ENCODE measurements at regions of chr12 and their contacts with region 1.

Region 1: GRCh38 chr12:108950991-108951739 is 69.7 kb downstream of the SVOP start:
- DNase-seq: peak; percentile 61 to 74 (median 66)
- H3K4me3 ChIP-seq: no peak overlapping the region
- H3K4me3 Mint-ChIP-seq: no peak overlapping the region
- H3K27ac ChIP-seq: no peak overlapping the region
- H3K27ac Mint-ChIP-seq: peak overlapping the region in 4 of 7 donors; percentile 18 to 45 (median 30)
- H3K4me1 ChIP-seq: peaks cover 21 to 29% of the 10 kb centered on the region in 2 donors
- H3K4me1 Mint-ChIP-seq: peaks cover 25% of the 10 kb centered on the region
- H3K27me3 ChIP-seq: no peaks in the 10 kb centered on the region
- H3K27me3 Mint-ChIP-seq: peaks cover 7 to 10% (median 10%) of the 10 kb centered on the region in 3 donors
- CTCF ChIP-seq: peak; percentile 97

Region 2: GRCh38 chr12:108570743-108571608 is 380.2 kb before region 1 on chr12:
- intact Hi-C with region 1: loop called (anchors 10 kb)
- DNase-seq: no peak
- H3K4me3 ChIP-seq: no peak overlapping the region
- H3K4me3 Mint-ChIP-seq: no peak overlapping the region
- H3K27ac ChIP-seq: no peak overlapping the region
- H3K27ac Mint-ChIP-seq: no peak overlapping the region
- H3K4me1 ChIP-seq: peaks cover 20 to 22% of the 10 kb centered on the region in 2 donors
- H3K4me1 Mint-ChIP-seq: peaks cover 19% of the 10 kb centered on the region
- H3K27me3 ChIP-seq: no peaks in the 10 kb centered on the region
- H3K27me3 Mint-ChIP-seq: peaks cover 2% of the 10 kb centered on the region in 3 donors
- CTCF ChIP-seq: no peak

Region 3: GRCh38 chr12:108664338-108665258 is 286.6 kb before region 1 on chr12:
- intact Hi-C with region 1: loop called in 1 of 2 experiments (anchors 10 kb)
- DNase-seq: peak; percentile 95 to 97 (median 95)
- H3K4me3 ChIP-seq: peak overlapping the region; percentile 5 to 67 (median 43)
- H3K4me3 Mint-ChIP-seq: peak overlapping the region; percentile 61 to 86
- H3K27ac ChIP-seq: peak overlapping the region; percentile 88 to 95
- H3K27ac Mint-ChIP-seq: peak overlapping the region; percentile 97 to 99 (median 99)
- H3K4me1 ChIP-seq: peaks cover 54 to 61% of the 10 kb centered on the region in 2 donors
- H3K4me1 Mint-ChIP-seq: peaks cover 59% of the 10 kb centered on the region
- H3K27me3 ChIP-seq: no peaks in the 10 kb centered on the region
- H3K27me3 Mint-ChIP-seq: no peaks in the 10 kb centered on the region
- CTCF ChIP-seq: peak; percentile 93

Region 4: DNA sequence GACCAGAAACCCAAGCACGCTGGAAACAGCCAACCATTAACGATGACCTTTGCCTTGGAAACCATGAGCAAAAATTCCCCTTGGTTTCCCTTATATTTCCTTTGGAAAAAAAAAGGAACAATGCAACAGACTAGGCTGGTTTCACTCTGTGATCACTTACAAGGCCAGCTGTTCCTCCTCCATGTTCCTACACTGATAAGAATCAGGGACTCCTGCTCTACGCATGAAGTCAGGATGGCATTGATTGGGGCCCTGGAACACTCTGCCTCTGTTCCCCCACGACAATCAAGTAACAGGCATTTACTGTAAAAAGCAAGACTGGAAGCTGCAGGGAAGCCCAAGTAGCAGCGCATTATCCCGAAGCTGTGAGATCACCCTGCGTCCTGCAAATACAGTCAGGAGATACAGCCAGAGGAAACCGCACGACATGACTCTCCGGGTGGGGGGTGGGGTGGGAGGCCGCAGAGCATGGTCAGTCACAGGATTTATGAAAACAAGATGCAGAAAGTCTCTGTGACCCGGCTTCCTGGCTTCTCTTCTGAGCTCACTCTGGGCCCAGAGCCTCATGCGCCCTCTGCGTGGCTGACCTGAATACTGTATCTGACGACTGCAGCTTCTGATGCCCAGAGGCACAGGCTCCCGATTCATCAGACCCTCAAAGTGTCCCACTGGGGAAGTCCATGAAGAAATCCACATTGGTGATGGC is 124.9 kb before region 1 on chr12:
- intact Hi-C with region 1: loop called in 1 of 2 experiments (anchors 5 kb)
- DNase-seq: peak; percentile 70 to 83 (median 77)
- H3K4me3 ChIP-seq: peak overlapping the region in 1 of 3 experiments; percentile 33
- H3K4me3 Mint-ChIP-seq: peak overlapping the region; percentile 54 to 85
- H3K27ac ChIP-seq: peak overlapping the region; percentile 45 to 81
- H3K27ac Mint-ChIP-seq: peak overlapping the region; percentile 81 to 96 (median 91)
- H3K4me1 ChIP-seq: peaks cover 65 to 66% of the 10 kb centered on the region in 2 donors
- H3K4me1 Mint-ChIP-seq: peaks cover 63% of the 10 kb centered on the region
- H3K27me3 ChIP-seq: no peaks in the 10 kb centered on the region
- H3K27me3 Mint-ChIP-seq: peaks cover 0 to 1% (median 0%) of the 10 kb centered on the region in 3 donors
- CTCF ChIP-seq: no peak

Region 5: DNA sequence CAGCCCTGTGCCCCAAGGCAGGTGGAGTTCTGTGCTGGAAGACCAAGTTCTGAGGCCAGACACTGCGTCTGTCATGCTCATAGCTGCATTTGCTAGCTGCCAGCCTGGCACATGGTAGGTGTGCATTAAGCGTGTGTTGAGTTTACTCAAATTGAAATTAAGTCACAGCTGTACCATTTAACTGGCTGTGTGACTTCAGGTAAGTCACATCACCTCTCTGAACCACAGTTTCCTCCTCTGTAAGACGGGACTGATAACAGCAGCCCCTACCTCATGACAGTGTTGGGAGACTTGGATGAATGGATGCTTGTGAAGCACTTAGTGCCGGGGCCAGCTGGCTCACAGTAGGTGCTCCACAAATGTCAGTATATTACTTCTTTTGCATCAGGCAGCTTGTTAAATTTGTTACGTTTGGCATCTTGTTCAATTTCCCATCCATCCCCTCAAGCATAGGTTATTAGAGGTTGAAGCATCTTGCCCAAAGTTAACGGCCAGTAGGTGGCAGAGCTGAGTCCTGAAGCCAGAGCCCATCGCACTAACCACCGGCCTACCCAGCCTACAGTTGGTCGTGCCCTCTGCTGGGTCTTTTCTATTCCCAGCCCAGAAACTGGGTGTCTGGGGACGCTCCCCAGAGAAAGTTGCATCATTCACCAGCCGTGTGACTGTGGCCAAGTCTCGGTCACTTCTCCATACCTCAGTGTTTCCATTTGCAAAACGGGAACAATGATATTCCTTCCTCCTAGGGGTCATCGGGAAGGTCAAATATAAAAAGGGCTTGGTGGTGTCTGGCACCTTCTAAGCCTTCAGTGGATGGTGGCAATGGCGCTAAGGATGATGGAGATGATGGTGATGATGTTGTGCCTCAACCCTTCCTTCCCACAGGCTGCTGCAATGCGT is 66.8 kb before region 1 on chr12:
- intact Hi-C with region 1: loop called (anchors 2 to 5 kb)
- DNase-seq: peak; percentile 92 to 96 (median 96)
- H3K4me3 ChIP-seq: no peak overlapping the region
- H3K4me3 Mint-ChIP-seq: peak overlapping the region in 1 of 2 donors; percentile 1
- H3K27ac ChIP-seq: peak overlapping the region; percentile 8 to 30
- H3K27ac Mint-ChIP-seq: peak overlapping the region; percentile 50 to 82 (median 68)
- H3K4me1 ChIP-seq: peaks cover 14 to 16% of the 10 kb centered on the region in 2 donors
- H3K4me1 Mint-ChIP-seq: peaks cover 11% of the 10 kb centered on the region
- H3K27me3 ChIP-seq: no peaks in the 10 kb centered on the region
- H3K27me3 Mint-ChIP-seq: peaks cover 0 to 10% (median 2%) of the 10 kb centered on the region in 3 donors
- CTCF ChIP-seq: peak; percentile 85

Region 6: DNA sequence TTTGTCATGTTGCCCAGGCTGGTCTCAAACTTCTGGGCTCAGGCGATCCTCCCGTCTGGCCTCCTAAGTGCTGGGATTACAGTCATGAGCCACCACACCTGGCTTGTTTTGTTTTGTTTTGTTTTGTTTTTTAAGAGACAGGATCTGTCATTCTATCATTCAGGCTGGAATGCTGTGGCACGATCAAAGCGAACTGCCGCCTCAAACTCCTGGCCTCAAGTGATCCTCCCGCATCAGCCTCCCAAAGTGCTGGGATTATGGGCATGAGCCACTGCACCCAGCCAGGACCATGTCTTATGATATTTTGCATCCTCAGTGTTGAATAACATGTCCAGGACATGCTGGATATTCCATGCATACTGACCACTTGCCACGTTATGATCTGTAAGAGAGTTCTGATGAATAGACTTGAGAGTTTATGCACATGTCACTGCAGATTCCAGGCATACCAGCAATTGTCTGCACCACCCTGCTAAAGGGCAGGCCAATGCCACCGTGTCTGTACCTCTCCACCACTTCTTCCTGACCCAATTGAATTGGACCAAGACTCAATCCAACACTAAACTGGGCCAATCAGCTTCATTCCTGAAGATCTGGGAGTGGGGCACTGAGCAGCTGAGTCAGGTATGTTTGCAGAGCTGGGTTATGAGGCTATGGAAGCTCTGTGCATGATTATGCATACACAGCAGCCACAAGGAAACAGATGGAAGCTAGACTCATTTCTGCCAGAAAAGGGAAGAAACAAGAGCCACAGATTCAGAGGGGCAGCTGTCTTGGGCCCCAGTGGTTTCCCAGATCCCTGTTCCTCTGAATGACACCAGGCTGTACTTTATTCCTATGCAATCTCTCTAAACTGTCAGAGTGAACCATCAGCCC is 43.5 kb before region 1 on chr12:
- intact Hi-C with region 1: loop called in 1 of 2 experiments (anchors 5 kb)
- DNase-seq: peak; percentile 37 to 64 (median 56)
- H3K4me3 ChIP-seq: peak overlapping the region in 1 of 3 experiments; percentile 51
- H3K4me3 Mint-ChIP-seq: peak overlapping the region in 1 of 2 donors; percentile 11
- H3K27ac ChIP-seq: peak overlapping the region; percentile 8 to 98
- H3K27ac Mint-ChIP-seq: peak overlapping the region; percentile 80 to 99 (median 98)
- H3K4me1 ChIP-seq: peaks cover 62 to 63% of the 10 kb centered on the region in 2 donors
- H3K4me1 Mint-ChIP-seq: peaks cover 62% of the 10 kb centered on the region
- H3K27me3 ChIP-seq: no peaks in the 10 kb centered on the region
- H3K27me3 Mint-ChIP-seq: peaks cover 0 to 4% (median 0%) of the 10 kb centered on the region in 3 donors
- CTCF ChIP-seq: no peak

Region 7: DNA sequence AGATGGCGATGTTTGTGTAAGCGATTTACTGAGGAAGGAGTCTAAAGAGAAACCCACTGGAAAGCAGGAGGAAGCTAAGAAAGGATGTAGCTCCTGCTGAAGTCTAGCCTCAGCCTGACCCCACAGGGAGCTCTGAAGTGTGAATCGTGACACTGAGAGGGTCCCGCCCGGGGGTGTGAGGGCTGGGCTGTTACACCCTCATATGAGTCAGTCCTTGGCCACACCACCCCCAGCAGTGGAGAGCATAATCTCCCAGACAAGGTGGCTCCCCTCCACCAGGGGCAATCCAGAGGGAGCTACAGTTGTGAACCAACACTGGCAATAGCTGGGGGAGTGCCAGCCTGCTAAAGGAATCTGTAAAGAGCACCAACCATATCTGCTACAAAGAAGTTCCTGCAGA is 38.2 kb after region 1 on chr12:
- intact Hi-C with region 1: no loop called
- DNase-seq: no peak
- H3K4me3 ChIP-seq: no peak overlapping the region
- H3K4me3 Mint-ChIP-seq: peak overlapping the region in 1 of 2 donors; percentile 20
- H3K27ac ChIP-seq: no peak overlapping the region
- H3K27ac Mint-ChIP-seq: no peak overlapping the region
- H3K4me1 ChIP-seq: no peaks in the 10 kb centered on the region
- H3K4me1 Mint-ChIP-seq: no peaks in the 10 kb centered on the region
- H3K27me3 ChIP-seq: peaks cover 0 to 2% of the 10 kb centered on the region in 2 donors
- H3K27me3 Mint-ChIP-seq: peaks cover 5 to 14% (median 7%) of the 10 kb centered on the region in 3 donors
- CTCF ChIP-seq: no peak

Region 8: DNA sequence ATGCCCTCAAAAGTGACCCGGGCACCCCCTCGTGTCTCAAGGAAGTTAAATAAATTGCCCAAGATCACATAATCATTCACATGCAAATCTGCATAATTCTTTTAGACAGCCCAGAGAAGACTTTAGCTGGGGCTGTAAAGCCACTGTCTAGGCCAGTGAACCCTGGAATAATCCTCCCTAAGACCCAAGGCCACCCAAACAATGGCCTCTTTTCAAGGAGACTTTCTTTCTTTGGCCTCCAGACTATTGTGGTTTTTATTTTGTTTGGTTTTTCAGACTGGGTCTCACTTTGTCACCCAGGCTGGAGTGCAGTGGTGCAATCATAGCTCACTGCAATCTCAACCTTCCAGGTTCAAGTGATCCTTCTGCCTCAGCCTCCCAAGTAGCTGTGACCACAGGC is 59.1 kb after region 1 on chr12:
- intact Hi-C with region 1: no loop called
- DNase-seq: no peak
- H3K4me3 ChIP-seq: no peak overlapping the region
- H3K4me3 Mint-ChIP-seq: no peak overlapping the region
- H3K27ac ChIP-seq: no peak overlapping the region
- H3K27ac Mint-ChIP-seq: no peak overlapping the region
- H3K4me1 ChIP-seq: no peaks in the 10 kb centered on the region
- H3K4me1 Mint-ChIP-seq: peaks cover 2% of the 10 kb centered on the region
- H3K27me3 ChIP-seq: no peaks in the 10 kb centered on the region
- H3K27me3 Mint-ChIP-seq: peaks cover 3 to 19% (median 9%) of the 10 kb centered on the region in 3 donors
- CTCF ChIP-seq: no peak

Measured in CD14-positive monocyte (primary cell).